Gastrocnemius medialis (tissue), 4 donors: ENCODE measurements at regions of chr20 and their contacts with region 1.

Region 1: DNA sequence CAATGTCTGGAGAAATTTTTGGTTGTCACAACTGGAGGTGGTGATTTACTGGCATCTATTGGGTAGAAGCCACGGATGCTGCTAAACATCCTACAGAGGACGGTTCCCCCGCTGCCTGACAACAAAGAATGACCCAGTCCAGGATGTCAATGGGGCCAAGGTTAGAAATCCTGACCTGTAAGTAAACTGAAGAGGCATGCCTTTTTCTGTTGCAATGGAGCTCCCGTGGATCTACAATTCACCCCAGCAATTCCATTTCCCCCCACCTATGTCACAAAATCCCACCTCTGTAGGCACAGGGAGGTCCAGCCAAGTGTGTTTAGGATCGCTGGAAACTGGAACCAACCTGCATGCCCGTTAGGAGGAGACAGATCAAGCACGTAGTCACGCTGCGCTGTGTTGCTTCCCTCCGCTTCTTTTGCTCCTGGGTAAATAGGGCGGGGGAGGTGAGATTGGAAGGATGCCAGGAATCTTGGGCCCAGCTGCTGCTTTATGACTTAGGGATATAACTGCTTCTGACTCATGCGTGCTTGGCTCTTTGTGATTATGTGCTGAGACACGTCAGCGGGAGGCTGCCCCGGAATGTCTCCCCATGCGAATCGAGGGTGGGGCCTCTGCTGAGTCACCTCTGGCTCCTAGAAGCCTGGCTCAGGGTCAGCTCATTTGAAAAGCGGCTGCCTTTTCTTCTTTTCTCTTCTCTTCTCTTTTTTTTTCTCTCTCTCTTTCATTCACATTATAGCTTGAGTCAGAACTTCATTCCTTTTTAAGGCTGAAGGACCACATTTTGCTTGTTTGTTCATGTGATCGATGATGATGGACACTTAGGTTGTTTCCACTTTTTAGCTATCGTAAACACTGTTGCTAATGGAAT is 12.4 kb upstream of the PEDS1 start:
- DNase-seq: peak; percentile 99 to 100
- ATAC-seq: peak; percentile 88 to 96
- H3K4me3 ChIP-seq: peak overlapping the region; percentile 42 to 56 (median 46)
- H3K27ac ChIP-seq: peak overlapping the region; percentile 87 to 98 (median 96)
- H3K4me1 ChIP-seq: peaks cover 28 to 41% of the 10 kb centered on the region in 2 donors
- H3K27me3 ChIP-seq: no peaks in the 10 kb centered on the region
- CTCF ChIP-seq: no peak
- POLR2A ChIP-seq: peak; percentile 36 to 63

Region 2: DNA sequence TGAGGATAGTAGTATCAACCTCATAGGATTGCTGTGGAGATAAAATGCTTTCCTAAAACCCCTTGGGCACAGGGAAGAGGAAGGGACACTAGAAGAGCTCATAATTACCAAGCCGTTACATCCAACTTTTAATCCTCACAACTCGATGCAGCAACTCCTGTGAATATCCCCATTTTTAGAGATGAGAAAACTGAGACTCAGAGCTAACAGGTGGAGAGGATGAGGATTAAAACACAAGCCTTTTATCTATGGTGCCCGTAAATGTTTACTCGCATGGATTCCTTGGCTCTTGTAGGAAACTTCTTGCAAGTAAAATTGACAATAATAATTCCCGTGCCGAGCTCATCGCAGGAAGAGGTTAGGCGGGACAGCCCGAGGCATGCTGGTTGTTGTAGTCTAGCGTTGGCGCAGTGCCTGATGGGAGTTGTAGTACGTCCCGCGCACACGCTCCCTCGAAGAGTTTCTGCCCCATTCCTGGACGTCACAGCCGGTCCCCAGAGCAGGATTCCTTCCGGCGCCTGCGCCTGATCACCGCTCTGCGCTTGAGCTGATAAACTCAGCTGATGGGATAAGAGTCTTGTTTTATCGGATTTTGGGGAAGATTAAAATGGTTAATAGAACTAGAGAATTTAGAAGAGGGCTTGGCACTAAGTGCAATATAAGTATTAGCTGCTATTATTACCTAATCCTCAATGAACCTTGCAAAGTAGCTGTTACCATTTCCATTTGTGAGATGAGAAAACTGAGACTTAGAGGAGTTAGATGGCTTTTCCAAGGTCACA is 50.1 kb before region 1 on chr20:
- in situ Hi-C with region 1: loop called (anchors 5 kb)
- intact Hi-C with region 1: no loop called
- DNase-seq: peak; percentile 97
- ATAC-seq: peak; percentile 85 to 87
- H3K4me3 ChIP-seq: peak overlapping the region; percentile 55 to 63 (median 59)
- H3K27ac ChIP-seq: peak overlapping the region; percentile 80 to 98 (median 88)
- H3K4me1 ChIP-seq: peaks cover 37 to 40% of the 10 kb centered on the region in 2 donors
- H3K27me3 ChIP-seq: no peaks in the 10 kb centered on the region
- CTCF ChIP-seq: no peak
- POLR2A ChIP-seq: peak; percentile 45 to 51

Region 3: GRCh38 chr20:50120897-50121693 is 44.8 kb before region 1 on chr20:
- in situ Hi-C with region 1: loop called (anchors 5 kb)
- intact Hi-C with region 1: loop called (anchors 1 kb)
- DNase-seq: peak; percentile 61 to 83
- ATAC-seq: peak; percentile 80 to 89
- H3K4me3 ChIP-seq: no peak overlapping the region
- H3K27ac ChIP-seq: peak overlapping the region; percentile 43 to 81 (median 68)
- H3K4me1 ChIP-seq: peaks cover 10 to 14% of the 10 kb centered on the region in 2 donors
- H3K27me3 ChIP-seq: no peaks in the 10 kb centered on the region
- CTCF ChIP-seq: peak; percentile 92 to 96 (median 96)
- POLR2A ChIP-seq: no peak

Region 4: GRCh38 chr20:50130995-50131394 is 34.9 kb before region 1 on chr20:
- in situ Hi-C with region 1: no loop called
- intact Hi-C with region 1: loop called (anchors 1 kb)
- DNase-seq: peak; percentile 90 to 94
- ATAC-seq: peak; percentile 71 to 80
- H3K4me3 ChIP-seq: no peak overlapping the region
- H3K27ac ChIP-seq: peak overlapping the region; percentile 85 to 96 (median 90)
- H3K4me1 ChIP-seq: peaks cover 62 to 90% of the 10 kb centered on the region in 2 donors
- H3K27me3 ChIP-seq: no peaks in the 10 kb centered on the region
- CTCF ChIP-seq: no peak
- POLR2A ChIP-seq: no peak

Region 5: DNA sequence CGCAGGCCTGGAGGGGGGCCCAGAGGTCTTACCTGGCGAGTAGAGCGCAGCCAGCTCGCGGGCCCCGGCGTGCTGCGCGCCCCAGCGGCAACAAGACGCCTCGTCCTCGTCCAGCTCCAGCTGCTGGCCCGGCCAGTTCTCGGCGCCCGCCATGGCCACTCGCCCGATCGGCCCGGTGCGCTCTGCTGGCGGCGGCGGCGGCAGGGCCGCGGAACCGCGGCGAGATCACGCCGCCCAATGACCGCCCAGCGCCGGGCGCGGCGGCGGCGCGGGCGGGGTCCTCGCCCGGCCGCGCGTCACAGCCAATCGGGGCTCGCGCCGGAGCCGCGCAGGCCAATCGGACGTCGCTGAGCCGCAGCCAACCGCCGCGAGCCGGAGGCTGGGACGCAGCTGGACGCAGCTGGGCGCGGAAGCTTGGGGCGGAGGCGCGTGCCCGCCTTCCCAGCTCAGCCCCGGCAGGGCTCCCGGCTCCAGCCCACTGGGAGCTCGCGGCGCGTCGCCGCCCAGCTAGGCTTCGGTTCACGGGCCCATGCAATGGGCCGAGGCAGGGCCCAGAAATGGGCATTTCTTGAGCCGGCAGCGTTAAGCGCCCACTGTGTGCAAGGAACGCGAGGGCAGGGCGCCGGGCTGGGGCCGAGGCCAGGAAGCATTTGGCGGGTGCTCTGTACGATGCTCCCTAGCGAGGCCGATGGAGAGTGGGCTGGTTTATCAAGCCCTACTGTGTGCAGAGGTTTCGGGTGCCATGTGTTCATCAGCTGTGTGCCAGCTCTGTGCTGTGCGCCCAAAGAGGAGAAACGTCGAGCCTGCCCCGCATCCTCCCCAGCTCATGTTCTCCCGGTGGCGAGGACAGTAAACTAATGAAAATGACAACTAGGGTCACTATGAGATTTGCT is 12.2 kb before region 1 on chr20 and contains the start of gene PEDS1:
- in situ Hi-C with region 1: no loop called
- intact Hi-C with region 1: loop called (anchors 1 kb)
- DNase-seq: peak; percentile 84 to 90
- ATAC-seq: peak; percentile 76 to 80
- H3K4me3 ChIP-seq: peak within 1 kb of the TSS; percentile 82 to 90 (median 82)
- H3K27ac ChIP-seq: peak within 1 kb of the TSS; percentile 91 to 98 (median 96)
- H3K4me1 ChIP-seq: peaks cover 41 to 43% of the 10 kb centered on the region in 2 donors
- H3K27me3 ChIP-seq: no peaks in the 10 kb centered on the region
- CTCF ChIP-seq: peak in 3 of 5 experiments; percentile 16 to 36 (median 17)
- POLR2A ChIP-seq: peak; percentile 96 to 98
- total RNA-seq, gene PEDS1: 33.2 to 77.9 (median 38.2) TPM

Region 6: DNA sequence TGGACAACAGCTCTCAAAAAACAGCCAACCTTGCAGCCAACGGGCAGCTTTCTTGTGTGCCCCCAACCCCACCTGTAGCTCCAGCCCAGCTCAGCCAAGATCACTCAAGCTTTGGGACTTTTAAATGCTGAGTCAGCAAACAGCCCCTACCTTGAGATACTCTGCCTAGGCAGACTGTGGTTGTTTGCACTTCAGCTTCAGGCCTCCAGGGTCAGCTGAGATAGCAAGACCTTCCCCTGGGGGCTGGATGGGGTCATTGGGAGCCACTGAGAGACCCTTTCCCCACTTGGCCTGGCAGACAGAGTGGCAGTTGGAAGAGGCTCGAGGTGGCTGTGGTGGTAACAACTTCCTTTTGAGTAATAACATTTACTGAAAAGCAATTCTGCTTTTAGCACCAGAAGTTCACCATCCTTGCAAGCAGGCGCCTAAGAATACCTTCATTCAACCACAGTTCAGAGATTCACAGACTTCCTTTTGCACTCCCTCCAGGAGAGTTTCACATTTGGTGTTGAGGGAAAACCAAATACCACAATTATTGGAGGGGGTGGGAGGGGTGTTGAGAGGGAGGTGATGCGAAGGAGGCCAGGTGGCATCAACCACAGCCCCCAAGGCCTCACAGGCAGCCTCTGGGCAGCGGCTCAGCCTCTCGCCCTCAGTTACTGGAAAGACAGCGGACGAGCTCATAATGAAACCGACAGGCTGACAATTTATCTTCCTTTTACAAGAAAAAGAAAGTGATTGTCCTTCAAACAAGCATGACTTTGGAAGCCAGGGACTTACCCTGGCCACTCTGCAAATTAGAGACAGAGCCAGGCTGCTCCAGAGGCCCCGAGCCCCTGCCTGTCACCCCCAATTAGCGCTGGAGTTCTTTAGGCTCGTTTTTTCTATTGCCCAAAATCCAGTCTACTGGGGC is 172.8 kb after region 1 on chr20:
- in situ Hi-C with region 1: no loop called
- intact Hi-C with region 1: no loop called
- DNase-seq: no peak
- ATAC-seq: no peak
- H3K4me3 ChIP-seq: no peak overlapping the region
- H3K27ac ChIP-seq: peak overlapping the region in 2 of 4 donors; percentile 26 to 33
- H3K4me1 ChIP-seq: peaks cover 3 to 10% of the 10 kb centered on the region in 2 donors
- H3K27me3 ChIP-seq: no peaks in the 10 kb centered on the region
- CTCF ChIP-seq: no peak
- POLR2A ChIP-seq: no peak

Region 7: GRCh38 chr20:51184289-51184688 is 1018.4 kb after region 1 on chr20:
- in situ Hi-C with region 1: no loop called
- intact Hi-C with region 1: no loop called
- DNase-seq: no peak
- ATAC-seq: no peak
- H3K4me3 ChIP-seq: no peak overlapping the region
- H3K27ac ChIP-seq: no peak overlapping the region
- H3K4me1 ChIP-seq: no peaks in the 10 kb centered on the region
- H3K27me3 ChIP-seq: peaks cover 0 to 5% (median 0%) of the 10 kb centered on the region in 3 donors
- CTCF ChIP-seq: no peak
- POLR2A ChIP-seq: no peak